Mammary epithelial cell (primary cell): ENCODE measurements at regions of chr11 and their contacts with region 1.

Region 1: GRCh38 chr11:128039140-128040021 is 548.0 kb downstream of the ETS1 start:
- DNase-seq: peak; percentile 88
- H3K4me3 ChIP-seq: no peak overlapping the region
- H3K27ac ChIP-seq: peak overlapping the region; percentile 8
- H3K4me1 ChIP-seq: peaks cover 18% of the 10 kb centered on the region
- H3K27me3 ChIP-seq: no peaks in the 10 kb centered on the region
- CTCF ChIP-seq: peak; percentile 3 to 10

Region 2: DNA sequence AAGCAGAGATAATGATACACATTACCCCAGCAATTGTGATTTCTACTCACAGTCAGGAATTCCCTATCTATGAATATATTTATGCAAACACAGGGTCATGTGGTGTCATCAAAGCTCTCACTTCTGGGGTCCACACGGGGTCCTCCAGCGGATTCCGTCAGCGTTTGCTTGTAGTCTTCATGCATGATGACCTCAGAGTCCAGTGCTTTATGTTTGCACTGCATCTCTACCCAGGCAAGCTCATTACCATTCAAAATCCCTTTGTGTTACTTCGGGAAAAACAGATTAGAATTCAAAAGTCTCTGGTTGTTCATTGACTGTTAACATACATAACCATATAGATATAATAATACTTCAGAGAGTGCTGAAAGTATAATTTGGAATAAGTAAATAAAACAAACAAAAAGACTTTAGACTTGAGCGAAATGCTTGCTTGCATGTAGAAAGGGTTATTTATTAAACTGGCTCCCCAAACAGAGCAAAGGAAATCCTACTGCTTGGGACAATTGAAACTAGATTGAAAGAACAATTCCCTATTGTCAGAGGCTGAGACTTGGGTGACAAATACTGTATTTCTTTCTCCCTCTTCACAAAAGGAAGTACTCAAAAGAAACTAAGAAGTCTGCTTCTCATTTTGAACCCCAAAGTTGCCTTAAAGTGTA is 124.8 kb after region 1 on chr11:
- CTCF ChIA-PET with region 1: no interaction called
- dilution Hi-C with region 1: no loop called
- in situ Hi-C with region 1: loop called (anchors 5 to 10 kb)
- intact Hi-C with region 1: no loop called
- DNase-seq: no peak
- H3K4me3 ChIP-seq: no peak overlapping the region
- H3K27ac ChIP-seq: no peak overlapping the region
- H3K4me1 ChIP-seq: no peaks in the 10 kb centered on the region
- H3K27me3 ChIP-seq: no peaks in the 10 kb centered on the region
- CTCF ChIP-seq: no peak

Region 3: DNA sequence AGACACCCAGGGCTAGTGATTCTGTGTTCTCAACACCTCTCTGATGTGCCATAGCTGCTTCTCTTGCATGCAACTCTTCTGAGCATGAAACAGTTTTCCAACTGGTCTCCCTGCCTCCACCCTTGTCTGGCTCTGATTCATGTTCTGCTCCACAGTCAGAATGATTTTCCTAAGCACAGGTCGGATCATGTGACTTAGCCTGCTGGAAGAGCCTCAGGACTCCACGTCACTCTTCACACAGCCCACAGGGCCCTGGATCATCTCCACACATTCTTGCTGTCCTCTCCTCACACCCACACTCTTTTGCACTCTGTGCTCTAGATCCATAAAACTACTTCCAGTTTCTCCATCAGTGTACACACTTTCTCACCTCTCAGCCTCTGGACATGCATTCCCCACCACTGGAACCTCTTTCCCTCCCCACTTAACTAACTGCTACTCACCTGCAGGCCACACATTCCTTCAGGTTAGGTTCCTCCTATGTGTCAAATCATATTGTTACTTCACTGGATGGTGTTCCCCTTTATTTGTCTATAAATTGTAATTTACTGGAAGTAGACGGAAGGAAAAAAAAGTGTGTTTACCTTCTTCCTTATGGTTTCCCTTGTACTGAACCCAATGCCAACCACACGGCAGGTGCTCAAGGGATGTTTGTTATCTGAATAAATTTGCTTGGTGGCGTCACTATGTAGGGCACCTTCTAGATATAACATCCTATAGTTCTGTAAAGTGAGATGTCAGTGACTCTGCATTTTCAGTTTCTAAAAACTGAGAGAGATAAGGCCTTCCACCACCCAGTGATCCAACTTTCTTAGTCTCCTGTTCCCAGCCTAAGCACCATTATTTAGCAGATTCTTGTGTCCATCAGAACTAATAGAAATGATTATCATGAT is 414.3 kb after region 1 on chr11:
- CTCF ChIA-PET with region 1: no interaction called
- dilution Hi-C with region 1: no loop called
- in situ Hi-C with region 1: no loop called
- intact Hi-C with region 1: loop called (anchors 5 kb)
- DNase-seq: peak; percentile 94
- H3K4me3 ChIP-seq: no peak overlapping the region
- H3K27ac ChIP-seq: peak overlapping the region; percentile 67
- H3K4me1 ChIP-seq: peaks cover 56% of the 10 kb centered on the region
- H3K27me3 ChIP-seq: no peaks in the 10 kb centered on the region
- CTCF ChIP-seq: no peak

Region 4: DNA sequence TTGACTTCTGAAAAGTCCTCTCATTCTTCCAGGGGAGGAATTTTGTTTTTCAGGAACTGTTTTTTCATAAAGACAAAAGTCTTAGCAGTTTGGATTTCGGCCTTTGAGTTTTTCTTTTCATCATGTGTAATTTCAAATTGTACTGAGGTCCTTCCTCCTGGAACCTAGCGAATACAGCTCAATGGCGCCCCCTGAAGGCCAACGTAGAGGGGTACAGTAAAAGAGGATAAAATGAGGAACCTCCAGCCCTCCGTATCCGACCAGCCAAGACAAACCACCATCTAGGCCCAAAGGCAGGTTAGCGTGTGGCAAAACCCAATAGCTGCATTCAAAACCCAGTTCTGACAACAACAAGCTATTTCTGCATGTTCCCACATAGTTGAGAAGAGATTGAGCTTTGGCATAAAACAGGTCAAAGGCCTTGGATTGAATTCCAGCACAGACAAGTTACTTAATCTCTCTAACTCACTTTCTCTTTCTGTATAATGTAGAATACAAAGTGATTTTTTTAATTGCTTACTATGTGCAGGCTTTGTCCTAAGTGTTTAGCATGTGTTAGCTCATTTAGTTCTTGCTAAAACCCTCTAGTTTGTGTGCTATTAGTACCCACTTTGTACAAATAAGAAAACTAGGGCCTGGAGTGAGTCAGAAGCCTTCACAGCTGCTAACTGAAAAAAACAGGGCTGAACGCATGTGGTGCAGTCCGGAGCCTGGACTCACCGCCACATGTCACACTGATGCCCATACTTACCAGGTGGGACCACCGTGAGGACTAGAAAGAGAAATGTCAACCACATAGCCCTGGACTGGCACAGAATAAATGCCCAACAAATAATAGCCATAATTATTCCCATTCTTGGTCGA is 591.2 kb after region 1 on chr11:
- CTCF ChIA-PET with region 1: no interaction called
- dilution Hi-C with region 1: loop called (anchors 25 kb)
- in situ Hi-C with region 1: loop called (anchors 25 kb)
- intact Hi-C with region 1: no loop called
- DNase-seq: peak; percentile 60
- H3K4me3 ChIP-seq: no peak overlapping the region
- H3K27ac ChIP-seq: no peak overlapping the region
- H3K4me1 ChIP-seq: no peaks in the 10 kb centered on the region
- H3K27me3 ChIP-seq: no peaks in the 10 kb centered on the region
- CTCF ChIP-seq: peak; percentile 80 to 85

Region 5: DNA sequence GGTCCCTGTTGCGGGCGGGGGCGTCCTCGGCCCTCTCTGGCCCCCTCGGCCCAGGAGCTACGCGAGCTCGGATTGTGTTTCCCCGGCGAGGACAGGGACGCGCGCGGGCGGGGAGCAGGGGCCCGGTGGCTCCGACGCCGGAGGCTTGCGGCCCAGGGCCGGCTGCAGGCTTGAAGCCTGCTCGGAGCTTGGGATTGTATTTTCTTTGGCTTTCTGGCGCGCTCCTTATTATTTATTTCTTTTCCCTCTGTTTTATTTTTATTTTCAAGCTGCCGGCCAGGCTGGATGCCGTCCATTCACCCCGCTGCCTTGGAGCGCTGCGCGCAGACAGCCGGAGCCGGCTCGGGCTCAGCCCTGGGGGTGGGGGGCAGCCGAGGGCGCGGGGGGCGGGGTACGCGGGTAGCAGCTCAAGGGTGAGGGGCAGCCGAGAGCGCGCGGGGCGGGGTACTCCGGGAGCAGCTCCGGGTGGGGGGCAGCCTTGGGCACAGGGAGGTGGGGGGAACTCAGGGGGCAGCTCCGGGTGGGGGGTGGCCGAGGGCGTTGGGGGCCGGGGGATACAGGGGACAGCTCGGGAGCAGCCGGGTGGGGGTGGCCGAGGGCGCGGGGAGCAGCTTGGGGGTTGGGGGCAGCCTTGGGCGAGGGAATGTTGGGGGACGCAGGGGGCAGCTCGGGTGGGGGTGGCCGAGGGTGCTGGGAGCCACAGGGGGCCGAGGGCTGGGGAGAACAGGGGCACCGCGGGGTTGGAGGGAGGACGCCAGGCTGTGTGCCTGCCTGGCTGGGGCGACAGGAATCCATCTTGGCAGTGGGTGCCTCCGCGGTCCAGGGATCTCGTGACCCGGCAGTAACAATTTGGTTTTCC is 785.0 kb after region 1 on chr11:
- CTCF ChIA-PET with region 1: no interaction called
- dilution Hi-C with region 1: no loop called
- in situ Hi-C with region 1: loop called in 1 of 2 experiments (anchors 10 kb)
- intact Hi-C with region 1: no loop called
- DNase-seq: no peak
- H3K4me3 ChIP-seq: no peak overlapping the region
- H3K27ac ChIP-seq: no peak overlapping the region
- H3K4me1 ChIP-seq: no peaks in the 10 kb centered on the region
- H3K27me3 ChIP-seq: no peaks in the 10 kb centered on the region
- CTCF ChIP-seq: no peak

Region 6: GRCh38 chr11:128884703-128885338 is 845.4 kb after region 1 on chr11:
- CTCF ChIA-PET with region 1: no interaction called
- dilution Hi-C with region 1: no loop called
- in situ Hi-C with region 1: no loop called
- intact Hi-C with region 1: loop called (anchors 5 kb)
- DNase-seq: peak; percentile 60
- H3K4me3 ChIP-seq: no peak overlapping the region
- H3K27ac ChIP-seq: no peak overlapping the region
- H3K4me1 ChIP-seq: peaks cover 24% of the 10 kb centered on the region
- H3K27me3 ChIP-seq: no peaks in the 10 kb centered on the region
- CTCF ChIP-seq: peak; percentile 67 to 81

Region 7: GRCh38 chr11:129331871-129332274 is 1292.5 kb after region 1 on chr11:
- CTCF ChIA-PET with region 1: no interaction called
- dilution Hi-C with region 1: no loop called
- in situ Hi-C with region 1: no loop called
- intact Hi-C with region 1: loop called (anchors 5 kb)
- DNase-seq: peak; percentile 66
- H3K4me3 ChIP-seq: no peak overlapping the region
- H3K27ac ChIP-seq: no peak overlapping the region
- H3K4me1 ChIP-seq: no peaks in the 10 kb centered on the region
- H3K27me3 ChIP-seq: no peaks in the 10 kb centered on the region
- CTCF ChIP-seq: peak; percentile 90 to 97